Left ventricle myocardium superior (tissue), 1 donor: ENCODE measurements at regions of chr2 and their contacts with region 1.

Region 1: DNA sequence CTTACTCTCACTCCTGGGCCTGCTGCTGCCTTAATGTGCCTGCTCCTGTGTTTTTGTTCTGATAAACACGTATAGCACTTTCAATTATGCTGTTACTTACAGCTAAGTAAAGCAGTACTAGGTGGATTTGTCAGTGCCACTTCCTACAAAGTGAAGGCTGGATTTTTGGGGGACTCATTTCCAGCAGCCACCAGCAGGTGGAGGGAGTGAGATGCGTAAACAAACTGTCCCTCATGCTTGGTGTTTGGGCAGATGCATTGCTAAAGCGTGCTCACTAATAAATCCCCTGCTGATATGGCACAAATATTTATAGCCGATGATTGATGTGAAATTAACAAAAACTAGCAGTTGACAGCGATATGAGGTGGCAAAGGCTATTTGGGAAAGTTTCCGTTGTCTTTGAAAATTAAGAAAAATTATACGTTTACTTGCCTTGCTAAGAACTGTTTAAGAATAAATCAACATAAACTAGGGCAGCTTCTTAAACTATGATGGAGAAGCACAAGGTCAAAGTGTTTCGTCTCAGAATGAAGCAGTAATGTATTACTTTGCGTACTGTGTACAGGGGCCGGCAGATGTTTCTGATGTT is 101.7 kb downstream of the AGAP1 start:
- DNase-seq: peak; percentile 81
- ATAC-seq: peak; percentile 77

Region 2: GRCh38 chr2:235135990-235136561 is 459.4 kb before region 1 on chr2:
- intact Hi-C with region 1: loop called (anchors 5 kb)
- DNase-seq: peak; percentile 88
- ATAC-seq: peak; percentile 94

Region 3: DNA sequence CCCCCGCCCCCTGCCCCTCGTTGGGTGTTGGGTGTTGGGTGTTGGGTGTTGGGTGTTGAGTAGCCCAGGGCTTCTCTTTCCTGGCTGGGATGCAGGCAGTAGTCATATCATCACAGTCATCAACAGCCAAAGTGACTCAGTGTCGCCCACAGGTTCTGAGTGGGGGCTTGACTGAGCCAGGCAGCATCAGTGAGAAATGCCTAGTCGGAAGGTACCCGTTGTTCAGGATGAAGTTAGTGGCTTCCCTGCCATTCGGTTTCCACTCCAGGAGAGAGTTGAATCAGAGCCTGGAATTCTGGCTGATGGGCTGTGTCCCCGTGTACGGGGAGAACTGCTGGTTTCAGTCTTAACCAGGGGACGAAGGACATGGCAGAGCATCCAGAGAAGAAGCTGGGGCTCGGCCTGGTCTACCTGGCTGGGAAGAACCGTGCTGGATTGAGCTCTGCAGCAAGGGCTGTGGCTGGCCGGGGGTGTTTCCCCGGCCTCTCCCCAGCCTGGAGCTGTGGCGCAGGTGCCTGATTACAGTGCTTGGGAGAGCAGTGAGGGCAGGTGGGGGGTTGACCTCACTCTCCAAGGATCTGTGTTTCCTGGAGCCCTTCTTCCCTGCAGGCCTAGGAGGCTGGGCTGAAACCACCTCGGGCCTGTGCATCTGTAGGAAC is 52.3 kb before region 1 on chr2:
- intact Hi-C with region 1: no loop called
- DNase-seq: no peak
- ATAC-seq: no peak

Region 4: GRCh38 chr2:235669983-235670962 is 74.8 kb after region 1 on chr2:
- intact Hi-C with region 1: loop called (anchors 10 kb)
- DNase-seq: peak; percentile 82
- ATAC-seq: peak; percentile 79

Region 5: DNA sequence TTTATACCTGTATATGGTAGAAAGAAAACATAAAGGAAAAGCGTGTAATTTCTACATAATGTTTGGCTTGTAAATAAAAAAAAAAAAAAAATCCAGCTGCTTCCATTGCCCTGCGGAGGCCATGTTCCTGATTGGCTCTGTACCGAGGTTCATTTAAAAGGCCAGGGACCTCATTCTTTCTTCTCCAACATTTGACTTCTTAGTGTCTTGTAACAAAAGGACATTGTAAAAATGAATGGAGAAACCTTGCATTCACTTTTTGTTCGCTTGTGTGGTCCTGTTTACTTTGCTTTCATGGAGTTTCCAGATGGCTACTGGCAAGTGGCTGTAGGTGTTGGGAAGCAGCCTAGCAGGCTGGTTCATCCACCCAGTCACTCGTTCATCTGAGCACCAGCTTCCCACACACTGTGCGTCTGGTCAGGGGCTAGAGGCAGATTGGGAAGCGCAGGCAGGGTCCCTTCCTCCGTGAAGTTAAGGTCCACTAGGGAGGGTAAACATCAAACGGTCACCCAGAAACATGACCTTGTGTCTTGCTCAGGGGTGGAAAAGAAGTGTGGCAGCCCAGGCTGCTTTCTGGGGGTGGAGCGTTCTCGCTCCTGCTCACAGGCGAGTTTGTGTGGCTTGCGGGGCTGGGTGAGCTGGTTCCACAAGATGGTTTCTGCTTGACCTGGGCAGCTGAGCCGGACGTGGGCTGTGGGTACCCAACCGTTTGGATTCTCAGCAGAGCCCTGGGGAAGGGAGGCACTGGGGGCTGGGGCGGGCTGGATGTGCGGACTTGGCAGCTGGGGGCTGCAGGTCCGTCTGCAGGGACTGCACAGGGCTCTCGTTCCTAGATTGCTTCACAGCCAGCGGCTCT is 159.1 kb after region 1 on chr2:
- intact Hi-C with region 1: no loop called
- DNase-seq: no peak
- ATAC-seq: no peak